AG04449 (cell line): ENCODE measurements at regions of chr2 and their contacts with region 1.

Region 1: DNA sequence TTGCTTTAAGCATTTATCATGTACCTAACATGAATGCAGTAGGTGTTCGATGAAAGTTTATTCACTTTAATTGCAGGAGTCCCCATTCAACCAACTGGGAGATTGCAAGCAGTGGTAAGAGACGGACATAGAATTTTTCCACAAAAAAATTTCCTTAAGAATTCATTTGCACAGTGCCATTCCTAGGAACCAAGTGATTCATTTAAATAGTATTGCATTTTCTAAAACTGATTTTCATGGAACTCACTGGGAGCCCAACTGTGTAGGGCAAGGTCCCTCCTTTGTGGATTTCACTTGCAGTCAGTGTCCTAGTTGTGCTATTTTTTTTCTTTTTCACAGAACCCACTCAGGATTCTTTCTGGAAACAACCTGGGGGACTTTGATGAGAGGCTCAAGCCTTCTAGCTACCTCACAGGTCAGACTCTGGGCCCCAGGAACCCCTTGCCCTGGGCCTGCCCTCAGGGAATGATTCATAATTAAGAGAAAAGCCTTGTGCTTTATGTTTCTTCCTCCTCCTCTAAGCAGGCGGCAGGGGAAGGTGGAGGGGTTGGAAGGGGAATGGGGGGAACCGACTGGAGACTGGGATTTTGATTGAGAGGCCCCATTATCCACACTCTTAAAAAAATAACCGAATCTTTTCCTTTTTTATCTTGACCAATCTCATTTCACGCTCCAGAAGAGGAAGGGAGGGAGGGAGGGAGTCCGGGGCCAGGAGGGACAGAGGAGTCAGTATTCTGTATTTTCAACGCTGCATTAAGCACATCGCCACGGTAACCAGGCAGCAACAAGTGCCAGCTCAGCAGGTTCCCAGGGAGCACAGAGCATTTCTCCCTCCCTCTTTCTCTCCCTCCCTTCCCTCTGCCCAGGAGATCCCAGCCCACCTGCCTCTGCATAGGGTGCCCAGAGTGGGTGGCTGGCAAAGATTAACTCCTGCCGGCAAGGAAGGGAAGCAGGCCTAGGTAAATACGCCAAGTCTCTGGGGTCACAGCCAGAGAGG is 51.8 kb downstream of the PSD4 start:
- DNase-seq: no peak
- H3K4me3 ChIP-seq: no peak overlapping the region
- CTCF ChIP-seq: no peak

Region 2: DNA sequence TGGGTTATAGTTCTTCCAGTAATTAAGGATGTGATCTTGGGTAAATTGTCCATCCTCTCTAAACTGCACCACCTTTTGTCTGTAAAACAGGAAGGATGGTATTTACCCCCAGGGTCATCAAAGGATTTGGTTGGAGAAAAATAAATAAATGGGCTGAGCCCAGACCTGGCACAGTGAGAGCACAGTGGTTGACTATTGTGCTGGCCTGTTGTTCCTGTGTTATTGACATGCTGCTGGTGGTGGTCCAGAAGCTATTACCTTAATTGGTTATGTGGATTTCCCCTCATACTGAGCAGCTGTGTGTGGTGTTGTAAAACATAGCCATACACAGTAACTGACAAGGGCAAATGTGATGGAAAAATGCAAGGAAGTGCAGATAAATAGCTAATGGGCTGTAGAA is 315.3 kb before region 1 on chr2:
- CTCF ChIA-PET with region 1: no interaction called
- POLR2A ChIA-PET with region 1: no interaction called
- DNase-seq: no peak
- H3K4me3 ChIP-seq: no peak overlapping the region
- CTCF ChIP-seq: no peak

Region 3: GRCh38 chr2:113211226-113212105 is 14.1 kb before region 1 on chr2:
- CTCF ChIA-PET with region 1: interaction called, 11 read pairs
- POLR2A ChIA-PET with region 1: no interaction called
- DNase-seq: no peak
- H3K4me3 ChIP-seq: no peak overlapping the region
- CTCF ChIP-seq: no peak

Region 4: DNA sequence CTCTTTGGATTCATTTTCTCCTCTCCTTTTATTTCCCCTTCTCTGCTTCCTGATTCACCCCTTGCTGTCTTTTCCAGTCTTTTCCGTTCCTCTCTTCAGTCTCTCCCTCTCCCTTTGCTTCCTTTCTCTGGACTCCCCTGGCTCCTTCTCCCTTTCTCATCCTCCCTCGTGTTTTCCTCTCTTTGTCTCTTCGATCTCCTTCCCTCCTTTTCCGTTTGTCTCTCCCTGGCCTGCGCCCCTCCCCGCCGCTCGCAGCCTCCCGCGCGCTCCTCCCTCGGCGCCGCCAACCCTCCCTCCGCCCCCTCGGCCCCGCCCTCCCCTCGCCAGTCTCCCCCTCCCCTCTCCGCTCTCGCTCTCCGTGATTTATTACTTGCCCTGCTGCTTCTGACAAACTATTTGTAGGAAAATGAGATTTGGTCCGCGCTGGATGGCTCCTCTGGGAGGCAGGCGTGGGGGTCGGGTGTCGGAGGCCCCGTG is 99.2 kb after region 1 on chr2:
- CTCF ChIA-PET with region 1: no interaction called
- POLR2A ChIA-PET with region 1: no interaction called
- DNase-seq: no peak
- H3K4me3 ChIP-seq: peak overlapping the region; percentile 51
- CTCF ChIP-seq: no peak

Region 5: DNA sequence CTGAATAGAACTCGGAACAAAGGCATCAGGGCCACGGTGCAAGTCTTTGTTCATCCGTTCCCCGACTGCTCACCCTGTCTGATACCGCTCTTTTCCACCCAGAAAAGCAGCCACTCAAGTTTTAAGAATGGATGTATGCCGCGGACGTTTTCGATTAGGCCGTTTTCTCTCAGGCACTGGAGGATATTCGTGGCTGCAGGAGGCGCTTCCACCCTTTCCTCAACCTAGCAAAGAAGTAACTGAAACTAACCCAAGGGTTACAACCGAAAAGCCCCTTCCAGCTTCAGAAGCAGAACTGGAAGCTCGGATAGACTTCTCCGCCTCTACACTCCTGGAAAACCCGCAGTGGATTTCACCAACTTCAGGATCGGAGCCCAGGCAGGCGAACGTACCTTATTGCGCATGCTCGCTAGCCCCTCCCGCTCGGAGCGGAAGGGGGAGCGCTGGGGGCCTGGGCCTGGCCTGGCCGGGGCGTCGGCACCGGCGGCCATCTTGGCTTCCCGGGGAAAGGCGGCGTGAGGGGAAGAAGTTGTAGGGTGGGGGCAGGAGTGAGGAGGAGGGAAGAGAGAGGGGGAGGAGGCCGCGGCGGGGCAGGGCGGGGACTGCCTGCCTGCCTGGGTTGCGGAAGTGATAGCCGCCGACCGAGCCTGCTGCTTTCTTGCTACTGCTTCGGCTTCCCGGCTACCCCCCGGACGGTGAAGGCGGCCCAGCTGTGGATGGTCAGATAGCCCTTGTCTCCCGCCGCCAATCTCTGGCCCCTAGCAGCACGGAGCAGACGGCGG is 664.1 kb after region 1 on chr2 and contains the start of gene ACTR3:
- CTCF ChIA-PET with region 1: no interaction called
- POLR2A ChIA-PET with region 1: no interaction called
- DNase-seq: peak; percentile 89
- H3K4me3 ChIP-seq: peak within 1 kb of the TSS; percentile 96
- CTCF ChIP-seq: no peak